ENCODE measurements at regions of chr12 and their contacts with region 1.

Region 1: GRCh38 chr12:48716493-48717251 is at the start of gene CCNT1:
- DNase-seq: peak; percentile 100
- H3K4me3 ChIP-seq: peak within 1 kb of the TSS; percentile 77 to 99 (median 91)
- H3K27ac ChIP-seq: peak within 1 kb of the TSS; percentile 99 to 100
- H3K4me1 ChIP-seq: peaks cover 2 to 25% (median 12%) of the 10 kb centered on the region in 4 experiments
- H3K27me3 ChIP-seq: no peaks in the 10 kb centered on the region

Region 2: GRCh38 chr12:48681738-48682532 is 34.7 kb before region 1 on chr12 and contains the start of gene KANSL2:
- CTCF ChIA-PET with region 1: interaction called, 4 read pairs
- POLR2A ChIA-PET with region 1: interaction called, 15 read pairs
- DNase-seq: peak; percentile 98 to 99 (median 99)
- H3K4me3 ChIP-seq: peak within 1 kb of the TSS; percentile 66 to 100 (median 98)
- H3K27ac ChIP-seq: peak within 1 kb of the TSS; percentile 94 to 96
- H3K4me1 ChIP-seq: peaks cover 10 to 36% (median 26%) of the 10 kb centered on the region in 4 experiments
- H3K27me3 ChIP-seq: no peaks in the 10 kb centered on the region